Activated CD4-positive, alpha-beta T cell treated with anti-CD3 and anti-CD28 coated beads, Interleukin-2, amount 10 ng/mL, durations not matched to agents 24 days and 14 days (primary cell): ENCODE measurements at regions of chr6 and their contacts with region 1.

Region 1: GRCh38 chr6:89080542-89081422 is at the start of gene PNRC1:
- DNase-seq: peak; percentile 100
- H3K4me3 Mint-ChIP-seq: peak within 1 kb of the TSS; percentile 89
- H3K27ac Mint-ChIP-seq: peak within 1 kb of the TSS; percentile 98
- H3K4me1 Mint-ChIP-seq: peaks cover 26% of the 10 kb centered on the region
- H3K27me3 Mint-ChIP-seq: no peaks in the 10 kb centered on the region
- total RNA-seq, gene PNRC1: 48.3 and 51.2 TPM in 2 replicates

Region 2: DNA sequence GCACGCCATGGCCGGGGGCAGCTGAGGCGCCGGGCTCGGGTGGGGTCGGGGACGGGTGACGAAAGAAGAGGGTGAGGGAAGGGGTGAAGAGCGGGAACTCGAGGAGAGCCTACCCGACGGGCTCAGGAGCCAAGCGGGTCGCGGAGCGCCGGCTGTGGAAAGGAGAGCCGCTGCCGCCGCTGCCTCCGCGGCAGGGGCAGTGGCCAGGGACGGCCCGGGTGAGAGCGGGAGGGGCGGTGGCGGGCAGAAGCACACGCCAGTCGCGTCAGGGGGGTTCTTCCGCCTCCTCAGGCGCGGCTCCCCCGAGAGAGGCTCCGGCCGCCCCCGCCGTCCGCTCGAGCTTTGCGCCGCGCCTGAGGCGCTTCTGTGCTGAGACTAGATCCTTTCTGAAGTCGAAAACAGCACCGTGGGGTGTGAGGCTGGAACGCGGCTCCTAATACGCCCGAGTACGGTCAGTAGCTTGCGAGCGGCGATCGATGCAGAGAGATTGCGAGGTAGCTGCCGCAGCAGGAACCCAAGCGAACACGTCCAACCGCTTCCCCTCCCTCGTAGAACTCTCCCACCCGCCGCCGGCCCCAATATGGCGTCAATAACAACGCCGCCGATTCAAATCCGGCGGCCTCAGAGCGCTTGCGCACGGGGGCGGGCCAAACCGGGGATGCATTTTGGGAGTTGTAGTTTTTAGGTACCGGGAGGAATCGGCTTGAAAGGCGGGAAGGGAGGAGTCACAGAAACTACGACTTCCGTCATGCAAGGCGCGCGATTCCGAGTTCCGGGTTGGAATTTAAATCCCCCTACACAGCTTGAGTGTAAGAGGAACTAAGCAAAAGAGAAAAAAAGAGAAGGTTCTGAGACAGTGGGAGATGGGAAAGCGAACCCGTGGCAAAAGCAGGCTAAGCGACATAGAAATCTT is 1378.8 kb before region 1 on chr6 and contains the start of gene AKIRIN2:
- intact Hi-C with region 1: loop called (anchors 2 kb)
- DNase-seq: peak; percentile 99
- H3K4me3 Mint-ChIP-seq: peak within 1 kb of the TSS; percentile 97
- H3K27ac Mint-ChIP-seq: peak within 1 kb of the TSS; percentile 97
- H3K4me1 Mint-ChIP-seq: peaks cover 31% of the 10 kb centered on the region
- H3K27me3 Mint-ChIP-seq: no peaks in the 10 kb centered on the region
- total RNA-seq, gene AKIRIN2: 39.6 and 43.8 TPM in 2 replicates

Region 3: DNA sequence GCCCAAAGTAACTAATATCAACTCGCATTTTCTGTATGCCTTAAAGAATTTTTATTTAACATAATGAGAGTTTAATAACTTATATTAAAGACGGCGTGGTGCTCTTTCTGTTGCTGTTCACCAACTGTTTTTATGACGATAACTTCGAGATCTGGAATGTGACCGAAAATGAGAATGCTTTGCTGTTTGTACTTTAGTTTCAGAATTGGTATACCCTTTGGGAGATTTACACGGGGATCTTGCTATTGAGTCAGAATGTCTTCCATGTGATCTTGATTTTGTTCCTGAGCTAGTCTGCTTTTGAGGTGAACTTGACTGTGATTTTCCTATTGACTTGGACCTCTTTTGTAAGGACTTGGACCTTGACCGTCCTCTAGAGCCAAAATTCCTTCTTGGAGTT is 17.7 kb after region 1 on chr6:
- intact Hi-C with region 1: loop called (anchors 2 kb)
- DNase-seq: no peak
- H3K4me3 Mint-ChIP-seq: no peak overlapping the region
- H3K27ac Mint-ChIP-seq: no peak overlapping the region
- H3K4me1 Mint-ChIP-seq: peaks cover 4% of the 10 kb centered on the region
- H3K27me3 Mint-ChIP-seq: peaks cover 1% of the 10 kb centered on the region

Region 4: GRCh38 chr6:89297695-89298351 is 217.0 kb after region 1 on chr6:
- intact Hi-C with region 1: loop called (anchors 2 kb)
- DNase-seq: peak; percentile 90
- H3K4me3 Mint-ChIP-seq: peak overlapping the region; percentile 56
- H3K27ac Mint-ChIP-seq: peak overlapping the region; percentile 86
- H3K4me1 Mint-ChIP-seq: peaks cover 22% of the 10 kb centered on the region
- H3K27me3 Mint-ChIP-seq: no peaks in the 10 kb centered on the region

Region 5: GRCh38 chr6:89638320-89639195 is 557.8 kb after region 1 on chr6 and contains the start of gene LYRM2:
- intact Hi-C with region 1: loop called (anchors 1 kb)
- DNase-seq: peak; percentile 97
- H3K4me3 Mint-ChIP-seq: peak within 1 kb of the TSS; percentile 90
- H3K27ac Mint-ChIP-seq: peak within 1 kb of the TSS; percentile 98
- H3K4me1 Mint-ChIP-seq: peaks cover 26% of the 10 kb centered on the region
- H3K27me3 Mint-ChIP-seq: no peaks in the 10 kb centered on the region
- total RNA-seq, gene LYRM2: 29.4 and 33.7 TPM in 2 replicates

Region 6: GRCh38 chr6:89792873-89793272 is 712.1 kb after region 1 on chr6:
- intact Hi-C with region 1: no loop called
- DNase-seq: peak; percentile 78
- H3K4me3 Mint-ChIP-seq: peak overlapping the region; percentile 73
- H3K27ac Mint-ChIP-seq: peak overlapping the region; percentile 74
- H3K4me1 Mint-ChIP-seq: peaks cover 31% of the 10 kb centered on the region
- H3K27me3 Mint-ChIP-seq: no peaks in the 10 kb centered on the region